ENCODE measurements at regions of chrX and their contacts with region 1.

Region 1: DNA sequence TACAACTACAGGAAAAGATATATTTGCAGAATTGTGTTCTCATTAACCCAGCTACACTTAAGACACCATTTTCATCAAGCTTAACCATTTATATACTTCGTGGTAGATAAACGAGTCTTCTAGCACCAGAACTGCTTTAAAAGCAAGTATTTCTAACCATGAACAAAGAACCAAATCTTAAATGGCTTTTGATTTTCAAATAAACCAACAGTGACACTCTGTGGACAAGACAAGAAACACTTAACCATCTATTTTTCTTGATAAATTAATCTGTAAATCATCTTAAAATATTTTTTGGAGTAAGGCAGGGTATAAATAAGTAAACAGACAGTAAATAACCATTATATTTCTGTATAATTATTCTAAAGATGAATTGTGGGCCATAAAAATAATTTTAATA is 10.2 kb downstream of the BEND2 start:
- DNase-seq: peak in 1 of 2 experiments; percentile 34
- ATAC-seq: no peak
- H3K4me3 ChIP-seq: no peak overlapping the region
- H3K27ac ChIP-seq: no peak overlapping the region
- H3K4me1 ChIP-seq: no peaks in the 10 kb centered on the region
- CTCF ChIP-seq: peak; percentile 47; the same call in 2 of the 3 replicates
- EP300 ChIP-seq: no peak
- POLR2A ChIP-seq: no peak
- RAD21 ChIP-seq: peak; percentile 57 to 71

Region 2: DNA sequence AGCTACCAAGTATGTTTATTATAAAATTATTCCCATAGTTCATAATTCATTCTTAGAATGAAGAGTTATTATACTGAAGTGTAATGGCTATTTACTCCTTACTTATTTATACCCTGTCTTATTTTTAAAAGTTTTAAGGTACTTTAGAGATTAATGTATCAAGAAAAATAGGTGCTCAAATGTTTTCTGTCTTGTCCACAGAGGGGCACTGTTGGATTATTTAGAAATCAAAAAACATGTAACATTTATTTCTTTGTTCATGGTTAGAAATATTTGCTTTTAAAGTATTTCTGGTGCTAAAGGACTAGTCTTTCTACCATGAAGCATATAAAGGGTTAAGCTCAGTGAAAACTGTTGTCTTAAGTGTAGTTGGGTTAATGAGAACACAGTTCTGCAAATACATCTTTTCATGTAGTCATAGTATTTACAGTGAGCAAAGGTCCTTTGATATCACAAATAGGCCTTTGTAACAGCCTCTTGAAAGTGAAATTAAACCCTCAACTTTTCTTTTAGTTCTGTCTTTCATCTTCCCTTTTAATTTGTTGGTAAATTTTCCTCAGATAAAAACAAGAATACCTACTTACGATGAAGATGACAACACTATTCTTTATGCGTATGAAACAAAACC is 465.5 kb before region 1 on chrX:
- CTCF ChIA-PET with region 1: interaction called, 11 read pairs
- POLR2A ChIA-PET with region 1: no interaction called
- DNase-seq: peak in 1 of 2 experiments; percentile 4
- ATAC-seq: no peak
- H3K4me3 ChIP-seq: no peak overlapping the region
- H3K27ac ChIP-seq: no peak overlapping the region
- H3K4me1 ChIP-seq: peaks cover 13% of the 10 kb centered on the region; the same call in 2 of the 3 replicates
- CTCF ChIP-seq: peak; percentile 65
- EP300 ChIP-seq: no peak
- POLR2A ChIP-seq: no peak
- RAD21 ChIP-seq: peak; percentile 57 to 77